Activated CD8-positive, alpha-beta memory T cell treated with anti-CD3 and anti-CD28 coated beads, Interleukin-2, amount 10 ng/mL, durations not matched to agents 7 days and 5 days (primary cell): ENCODE measurements at regions of chr11 and their contacts with region 1.

Region 1: GRCh38 chr11:8263769-8264410 is at the start of gene LMO1:
- DNase-seq: peak; percentile 77
- ATAC-seq: peak; percentile 84
- H3K4me3 Mint-ChIP-seq: no peak within 1 kb of the TSS
- H3K27ac Mint-ChIP-seq: peak within 1 kb of the TSS; percentile 56
- H3K4me1 Mint-ChIP-seq: peaks cover 12% of the 10 kb centered on the region
- H3K27me3 Mint-ChIP-seq: peaks cover 84% of the 10 kb centered on the region
- total RNA-seq, gene LMO1: not detected

Region 2: DNA sequence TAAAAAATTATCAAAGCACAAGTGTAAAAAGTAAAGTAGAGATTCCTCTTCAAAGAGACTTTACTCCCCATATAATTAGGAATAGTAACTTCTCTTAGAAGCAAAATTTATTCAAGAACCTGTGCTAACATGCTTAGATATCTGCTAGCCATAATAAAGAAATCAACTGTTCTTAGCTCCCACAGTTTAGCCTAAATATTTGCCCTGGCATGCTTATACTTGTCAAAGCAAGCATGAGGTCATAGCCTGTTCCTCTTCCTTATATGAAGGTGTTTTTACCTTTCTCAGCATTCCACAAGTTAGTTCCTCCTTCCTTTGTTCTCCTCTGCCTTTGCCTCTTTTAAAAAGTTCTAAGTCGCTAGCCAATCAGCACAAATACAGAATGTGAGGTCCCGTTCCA is 125.4 kb before region 1 on chr11:
- CTCF ChIA-PET with region 1: no interaction called
- DNase-seq: no peak
- ATAC-seq: no peak
- H3K4me3 Mint-ChIP-seq: no peak overlapping the region
- H3K27ac Mint-ChIP-seq: no peak overlapping the region
- H3K4me1 Mint-ChIP-seq: no peaks in the 10 kb centered on the region
- H3K27me3 Mint-ChIP-seq: no peaks in the 10 kb centered on the region

Region 3: DNA sequence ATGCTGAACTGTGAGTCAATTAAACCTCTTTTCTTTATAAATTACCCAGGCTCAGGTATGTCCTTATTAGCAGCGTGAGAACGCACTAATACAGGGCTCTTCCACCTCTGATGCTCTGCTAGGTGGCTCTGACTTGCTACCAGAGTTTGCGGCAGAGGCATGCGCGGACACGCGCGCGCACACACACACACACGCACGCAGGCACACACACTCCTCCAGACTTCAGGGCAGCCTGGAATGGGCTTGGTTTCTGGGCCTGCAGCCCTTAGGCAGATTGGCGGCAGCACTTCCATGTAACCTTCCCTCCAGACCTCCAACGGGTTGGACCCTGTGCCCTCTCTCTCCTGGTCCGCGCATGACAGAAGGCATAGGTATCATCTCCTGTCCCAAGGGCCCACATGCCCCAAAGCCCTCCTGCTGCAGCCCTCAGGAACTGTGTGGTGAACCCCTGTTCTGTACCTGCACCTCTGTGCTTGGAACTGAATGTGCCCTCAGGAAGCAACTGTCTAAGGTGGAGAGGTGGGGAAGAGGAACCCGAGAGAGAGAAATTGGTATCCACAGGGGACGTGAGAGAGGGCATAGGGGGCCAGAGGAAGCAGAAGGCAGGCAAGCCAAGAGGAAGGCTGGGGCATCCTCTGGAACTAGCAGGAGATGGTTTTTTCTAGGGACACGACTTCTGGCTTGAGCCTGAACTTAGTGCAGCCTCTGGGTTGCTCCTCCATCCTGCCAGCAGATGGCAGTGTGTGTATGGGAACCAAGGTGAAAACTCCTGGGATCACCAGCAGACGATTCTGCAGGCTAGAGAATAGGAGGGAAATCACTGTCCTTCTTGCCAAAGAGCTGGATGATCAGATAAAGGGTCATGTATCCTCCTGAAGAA is 71.6 kb before region 1 on chr11:
- CTCF ChIA-PET with region 1: interaction called, 19 read pairs
- DNase-seq: peak; percentile 52
- ATAC-seq: peak; percentile 45
- H3K4me3 Mint-ChIP-seq: no peak overlapping the region
- H3K27ac Mint-ChIP-seq: no peak overlapping the region
- H3K4me1 Mint-ChIP-seq: no peaks in the 10 kb centered on the region
- H3K27me3 Mint-ChIP-seq: peaks cover 13% of the 10 kb centered on the region

Region 4: GRCh38 chr11:8229299-8230177 is 34.4 kb before region 1 on chr11:
- CTCF ChIA-PET with region 1: interaction called, 12 read pairs
- DNase-seq: no peak
- ATAC-seq: no peak
- H3K4me3 Mint-ChIP-seq: no peak overlapping the region
- H3K27ac Mint-ChIP-seq: no peak overlapping the region
- H3K4me1 Mint-ChIP-seq: no peaks in the 10 kb centered on the region
- H3K27me3 Mint-ChIP-seq: peaks cover 7% of the 10 kb centered on the region

Region 5: DNA sequence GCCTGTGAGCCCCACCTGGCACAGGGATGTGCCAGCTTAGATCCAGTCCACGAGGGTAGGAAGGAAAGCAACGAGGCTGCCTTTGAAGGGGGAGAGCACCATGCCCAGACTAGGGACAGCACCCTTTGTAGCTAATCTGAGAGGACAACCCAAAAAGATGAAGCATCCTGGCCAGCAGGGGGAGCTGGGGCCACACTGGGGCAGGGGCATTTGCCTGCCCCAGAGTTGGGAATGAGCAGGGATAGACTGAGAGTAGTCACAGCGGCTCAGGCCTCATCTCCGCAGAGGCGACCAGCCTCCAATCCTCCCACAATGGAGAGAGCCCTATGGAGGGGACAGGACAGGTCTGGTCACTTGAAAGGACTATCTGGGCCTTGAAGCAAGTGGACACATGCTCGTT is 16.6 kb before region 1 on chr11:
- CTCF ChIA-PET with region 1: interaction called, 17 read pairs
- DNase-seq: no peak
- ATAC-seq: no peak
- H3K4me3 Mint-ChIP-seq: no peak overlapping the region
- H3K27ac Mint-ChIP-seq: no peak overlapping the region
- H3K4me1 Mint-ChIP-seq: no peaks in the 10 kb centered on the region
- H3K27me3 Mint-ChIP-seq: peaks cover 7% of the 10 kb centered on the region

Region 6: DNA sequence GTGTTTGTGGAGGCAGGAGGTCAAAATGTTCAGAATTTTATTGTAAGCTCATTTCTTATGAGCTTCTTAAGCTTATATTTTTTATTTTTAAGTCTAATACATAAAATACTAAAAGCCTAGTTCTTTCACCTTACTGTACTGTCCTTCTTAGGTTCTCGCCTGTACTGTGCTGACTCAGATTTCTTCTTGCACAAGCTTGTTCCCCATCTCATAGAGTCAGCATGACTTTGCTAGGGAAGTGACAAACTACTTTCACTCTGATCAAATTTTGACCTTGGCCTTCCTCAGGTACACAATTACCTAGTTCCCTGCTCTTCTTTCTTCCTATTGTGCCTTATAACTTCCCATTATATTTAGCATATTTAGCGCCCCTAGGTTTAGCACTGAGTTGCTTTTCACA is 248.7 kb after region 1 on chr11:
- CTCF ChIA-PET with region 1: no interaction called
- DNase-seq: no peak
- ATAC-seq: no peak
- H3K4me3 Mint-ChIP-seq: no peak overlapping the region
- H3K27ac Mint-ChIP-seq: no peak overlapping the region
- H3K4me1 Mint-ChIP-seq: no peaks in the 10 kb centered on the region
- H3K27me3 Mint-ChIP-seq: peaks cover 2% of the 10 kb centered on the region

Region 7: GRCh38 chr11:8573777-8574176 is 309.9 kb after region 1 on chr11:
- CTCF ChIA-PET with region 1: no interaction called
- DNase-seq: no peak
- ATAC-seq: no peak
- H3K4me3 Mint-ChIP-seq: no peak overlapping the region
- H3K27ac Mint-ChIP-seq: no peak overlapping the region
- H3K4me1 Mint-ChIP-seq: no peaks in the 10 kb centered on the region
- H3K27me3 Mint-ChIP-seq: peaks cover 31% of the 10 kb centered on the region